ENCODE measurements at regions of chr21 and their contacts with region 1.

Region 1: GRCh38 chr21:40143822-40144525 is 276.7 kb downstream of the PCP4 start:
- DNase-seq: peak; percentile 44 to 67 (median 65)
- ATAC-seq: peak in 1 of 2 donors; percentile 26
- H3K4me3 ChIP-seq: no peak overlapping the region
- H3K27ac ChIP-seq: no peak overlapping the region
- H3K4me1 ChIP-seq: no peaks in the 10 kb centered on the region
- H3K27me3 ChIP-seq: no peaks in the 10 kb centered on the region

Region 2: DNA sequence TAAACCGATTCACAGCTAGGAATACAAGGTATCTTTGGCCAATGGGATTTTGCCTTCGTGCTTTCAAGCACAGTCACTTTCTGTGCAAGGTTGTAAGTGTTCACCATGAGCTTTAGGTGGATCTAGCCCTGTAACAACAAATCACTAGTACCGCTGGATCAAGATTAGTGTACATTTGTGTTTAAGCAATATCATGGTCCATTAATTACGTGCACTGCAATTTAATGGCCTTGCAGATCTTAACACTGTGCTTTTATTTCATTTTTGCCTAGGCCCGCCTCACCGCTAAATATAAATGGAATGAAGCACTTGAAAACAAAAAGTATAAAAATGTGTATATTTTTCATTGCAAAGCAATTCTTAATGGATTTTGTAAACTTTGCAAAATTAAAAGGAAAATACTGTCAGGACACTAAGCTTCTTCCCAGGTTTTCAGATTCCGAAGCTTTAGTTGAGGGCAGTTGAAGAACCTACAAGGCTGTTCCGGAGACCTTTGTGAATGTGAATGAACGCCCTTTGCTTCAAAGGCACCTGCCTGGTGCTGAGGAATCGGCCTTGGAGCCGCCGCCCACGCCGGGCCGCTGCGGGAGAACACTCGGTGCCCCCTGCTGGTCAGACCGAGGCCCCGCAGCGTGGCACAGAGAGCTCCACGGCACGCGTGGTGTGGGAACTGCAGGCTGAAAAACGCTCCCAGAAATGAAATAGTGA is 242.1 kb after region 1 on chr21:
- intact Hi-C with region 1: loop called in 2 of 4 experiments (anchors 2 to 5 kb)
- DNase-seq: peak; percentile 51 to 82 (median 71)
- ATAC-seq: peak; percentile 55 to 87
- H3K4me3 ChIP-seq: no peak overlapping the region
- H3K27ac ChIP-seq: no peak overlapping the region
- H3K4me1 ChIP-seq: no peaks in the 10 kb centered on the region
- H3K27me3 ChIP-seq: no peaks in the 10 kb centered on the region

Region 3: DNA sequence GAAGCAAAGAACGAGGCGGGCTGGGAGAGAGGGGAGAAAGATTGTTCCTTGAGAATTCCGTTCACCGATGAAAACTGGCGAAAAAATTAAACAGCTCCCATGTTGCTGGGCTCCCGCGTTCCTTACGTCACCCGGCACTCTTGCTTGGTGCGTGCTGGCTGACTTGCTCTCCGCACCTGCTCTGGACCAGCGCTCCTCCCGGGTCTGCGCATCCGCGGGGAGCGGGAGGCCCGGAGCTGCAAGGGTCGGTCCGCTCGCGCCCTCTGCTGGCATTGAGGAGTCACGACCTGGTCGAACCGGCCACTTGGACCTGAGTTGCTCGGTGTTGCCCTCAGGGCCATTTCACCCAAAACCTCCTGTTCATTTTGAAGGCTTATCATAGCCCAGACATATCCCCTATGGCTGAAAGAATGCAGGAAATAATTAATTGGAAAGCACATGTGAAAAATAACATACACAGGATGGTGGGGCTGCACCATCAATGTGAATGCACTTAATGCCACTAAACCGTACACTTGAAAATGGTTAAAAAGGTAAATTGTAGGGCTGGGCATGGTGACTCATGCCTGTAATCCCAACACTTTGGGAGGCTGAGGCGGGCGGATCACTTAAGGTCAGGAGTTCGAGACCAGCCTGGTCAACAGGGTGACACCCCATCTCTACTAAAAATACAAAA is 925.1 kb after region 1 on chr21:
- intact Hi-C with region 1: loop called in 3 of 4 experiments (anchors 5 to 10 kb)
- DNase-seq: peak; percentile 84 to 93 (median 93)
- ATAC-seq: peak; percentile 88 to 91
- H3K4me3 ChIP-seq: peak overlapping the region; percentile 23
- H3K27ac ChIP-seq: no peak overlapping the region
- H3K4me1 ChIP-seq: no peaks in the 10 kb centered on the region
- H3K27me3 ChIP-seq: no peaks in the 10 kb centered on the region